HAP-1 (cell line): ENCODE measurements at regions of chr13 and their contacts with region 1.

Region 1: GRCh38 chr13:45623515-45624090 is 8.1 kb upstream of the ERICH6B start:
- DNase-seq: peak in 1 of 2 experiments; percentile 33
- H3K4me3 ChIP-seq: no peak overlapping the region
- H3K4me1 ChIP-seq: peaks cover 20% of the 10 kb centered on the region
- H3K27me3 ChIP-seq: peaks cover 10% of the 10 kb centered on the region

Region 2: GRCh38 chr13:45167611-45168556 is 455.7 kb before region 1 on chr13:
- in situ Hi-C with region 1: no loop called
- DNase-seq: no peak
- H3K4me3 ChIP-seq: no peak overlapping the region
- H3K4me1 ChIP-seq: no peaks in the 10 kb centered on the region
- H3K27me3 ChIP-seq: no peaks in the 10 kb centered on the region

Region 3: GRCh38 chr13:45224176-45224575 is 399.4 kb before region 1 on chr13:
- in situ Hi-C with region 1: no loop called
- DNase-seq: no peak
- H3K4me3 ChIP-seq: no peak overlapping the region
- H3K4me1 ChIP-seq: peaks cover 23% of the 10 kb centered on the region
- H3K27me3 ChIP-seq: no peaks in the 10 kb centered on the region

Region 4: GRCh38 chr13:45310341-45311125 is 313.1 kb before region 1 on chr13:
- in situ Hi-C with region 1: no loop called
- DNase-seq: no peak
- H3K4me3 ChIP-seq: no peak overlapping the region
- H3K4me1 ChIP-seq: peaks cover 4% of the 10 kb centered on the region; the same call in 1 of the 2 replicates
- H3K27me3 ChIP-seq: no peaks in the 10 kb centered on the region

Region 5: DNA sequence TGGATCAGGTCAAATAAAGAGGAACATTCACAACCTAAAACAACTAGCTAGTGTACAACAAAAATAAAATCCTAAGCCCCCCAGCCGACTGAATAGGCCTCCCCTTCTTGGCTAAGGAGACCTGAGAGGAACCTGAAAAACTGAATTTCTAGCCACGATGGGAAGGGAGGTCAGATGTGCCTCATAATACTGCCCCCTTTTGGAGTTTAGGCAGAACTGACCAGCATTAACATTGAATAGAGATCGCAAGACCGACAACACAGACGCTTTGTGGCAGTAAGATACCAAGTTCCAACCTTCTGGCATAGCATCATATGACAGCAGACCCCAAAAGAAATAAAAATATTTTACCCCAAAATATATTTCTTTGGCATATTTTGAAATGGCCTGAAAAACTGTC is 94.5 kb after region 1 on chr13:
- in situ Hi-C with region 1: loop called (anchors 10 kb)
- DNase-seq: peak; percentile 28 to 32
- H3K4me3 ChIP-seq: no peak overlapping the region
- H3K4me1 ChIP-seq: peaks cover 6% of the 10 kb centered on the region; the same call in 1 of the 2 replicates
- H3K27me3 ChIP-seq: no peaks in the 10 kb centered on the region

Region 6: GRCh38 chr13:46126552-46127357 is 503.2 kb after region 1 on chr13:
- in situ Hi-C with region 1: loop called (anchors 25 kb)
- DNase-seq: peak; percentile 73 to 83
- H3K4me3 ChIP-seq: no peak overlapping the region
- H3K4me1 ChIP-seq: no peaks in the 10 kb centered on the region
- H3K27me3 ChIP-seq: no peaks in the 10 kb centered on the region; the same call in 1 of the 2 replicates

Region 7: GRCh38 chr13:46571189-46571908 is 947.7 kb after region 1 on chr13:
- in situ Hi-C with region 1: no loop called
- DNase-seq: no peak
- H3K4me3 ChIP-seq: no peak overlapping the region
- H3K4me1 ChIP-seq: peaks cover 3% of the 10 kb centered on the region; the same call in 1 of the 2 replicates
- H3K27me3 ChIP-seq: no peaks in the 10 kb centered on the region